ENCODE measurements at regions of chr5 and their contacts with region 1.

Region 1: GRCh38 chr5:80686757-80687156 is 32.0 kb upstream of the DHFR start:
- DNase-seq: no peak
- H3K4me3 ChIP-seq: no peak overlapping the region
- H3K27ac ChIP-seq: no peak overlapping the region
- H3K4me1 ChIP-seq: no peaks in the 10 kb centered on the region
- H3K27me3 ChIP-seq: no peaks in the 10 kb centered on the region
- CTCF ChIP-seq: peak in 3 of 5 experiments; percentile 14 to 29 (median 20)
- EP300 ChIP-seq: no peak
- POLR2A ChIP-seq: no peak

Region 2: DNA sequence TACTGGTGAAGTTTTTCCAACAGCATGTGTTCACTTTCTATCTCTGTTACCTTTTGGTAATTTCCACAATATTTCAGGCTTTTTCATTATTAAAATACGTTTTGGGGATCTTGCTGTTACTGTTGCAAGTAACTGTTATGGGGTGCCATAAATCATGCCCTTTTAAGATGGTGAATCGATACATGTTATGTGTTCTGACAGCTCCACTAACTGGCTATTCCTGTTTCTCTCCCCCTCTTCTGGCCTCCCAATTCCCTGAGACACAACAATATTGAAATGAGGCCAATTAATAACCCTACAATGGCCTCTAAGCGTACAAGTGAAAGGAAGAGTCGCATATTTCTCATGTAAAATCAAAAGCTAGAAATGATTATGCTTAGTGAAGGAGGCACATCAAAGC is 45.4 kb before region 1 on chr5:
- in situ Hi-C with region 1: no loop called
- intact Hi-C with region 1: no loop called
- DNase-seq: no peak
- H3K4me3 ChIP-seq: no peak overlapping the region
- H3K27ac ChIP-seq: no peak overlapping the region
- H3K4me1 ChIP-seq: no peaks in the 10 kb centered on the region
- H3K27me3 ChIP-seq: no peaks in the 10 kb centered on the region
- CTCF ChIP-seq: no peak
- EP300 ChIP-seq: no peak
- POLR2A ChIP-seq: no peak

Region 3: DNA sequence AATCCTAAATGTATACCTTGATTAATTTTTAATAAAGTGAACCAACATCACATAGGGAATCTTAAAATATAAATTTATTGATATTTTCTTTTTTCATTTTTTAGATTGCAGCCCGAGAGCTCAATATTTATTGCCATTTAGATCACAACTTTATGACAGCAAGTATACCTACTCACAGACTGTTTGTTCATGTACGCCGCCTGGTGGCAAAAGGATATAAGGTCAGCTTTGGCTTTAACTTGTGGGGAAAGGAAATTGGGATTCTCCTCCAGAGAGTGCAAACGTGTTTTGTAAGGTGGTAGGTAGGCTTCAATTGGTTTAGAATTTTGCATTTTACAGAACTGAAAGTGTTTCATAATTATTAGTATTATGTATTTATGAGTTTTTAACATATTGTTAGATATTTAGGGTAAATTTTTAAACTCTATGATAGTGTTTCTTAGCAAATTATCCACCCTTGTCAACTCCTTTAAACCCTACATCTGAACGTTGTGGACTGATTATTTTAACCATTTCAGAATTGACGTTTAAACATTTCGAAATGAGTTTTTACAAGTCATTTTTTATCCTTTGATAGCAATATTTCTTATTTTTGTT is 14.5 kb before region 1 on chr5:
- in situ Hi-C with region 1: no loop called
- intact Hi-C with region 1: no loop called
- DNase-seq: peak; percentile 79
- H3K4me3 ChIP-seq: no peak overlapping the region
- H3K27ac ChIP-seq: no peak overlapping the region
- H3K4me1 ChIP-seq: no peaks in the 10 kb centered on the region
- H3K27me3 ChIP-seq: no peaks in the 10 kb centered on the region
- CTCF ChIP-seq: peak; percentile 80 to 86 (median 84)
- EP300 ChIP-seq: no peak
- POLR2A ChIP-seq: no peak

Region 4: GRCh38 chr5:81194633-81195333 is 508.0 kb after region 1 on chr5:
- in situ Hi-C with region 1: loop called in 3 of 4 experiments (anchors 10 to 25 kb)
- intact Hi-C with region 1: no loop called
- DNase-seq: peak; percentile 79
- H3K4me3 ChIP-seq: no peak overlapping the region
- H3K27ac ChIP-seq: no peak overlapping the region
- H3K4me1 ChIP-seq: peaks cover 0 to 5% (median 2%) of the 10 kb centered on the region in 4 donors
- H3K27me3 ChIP-seq: no peaks in the 10 kb centered on the region
- CTCF ChIP-seq: peak; percentile 73 to 91 (median 81)
- EP300 ChIP-seq: no peak
- POLR2A ChIP-seq: no peak